GM13977 (cell line): ENCODE measurements at regions of chr6 and their contacts with region 1.

Region 1: DNA sequence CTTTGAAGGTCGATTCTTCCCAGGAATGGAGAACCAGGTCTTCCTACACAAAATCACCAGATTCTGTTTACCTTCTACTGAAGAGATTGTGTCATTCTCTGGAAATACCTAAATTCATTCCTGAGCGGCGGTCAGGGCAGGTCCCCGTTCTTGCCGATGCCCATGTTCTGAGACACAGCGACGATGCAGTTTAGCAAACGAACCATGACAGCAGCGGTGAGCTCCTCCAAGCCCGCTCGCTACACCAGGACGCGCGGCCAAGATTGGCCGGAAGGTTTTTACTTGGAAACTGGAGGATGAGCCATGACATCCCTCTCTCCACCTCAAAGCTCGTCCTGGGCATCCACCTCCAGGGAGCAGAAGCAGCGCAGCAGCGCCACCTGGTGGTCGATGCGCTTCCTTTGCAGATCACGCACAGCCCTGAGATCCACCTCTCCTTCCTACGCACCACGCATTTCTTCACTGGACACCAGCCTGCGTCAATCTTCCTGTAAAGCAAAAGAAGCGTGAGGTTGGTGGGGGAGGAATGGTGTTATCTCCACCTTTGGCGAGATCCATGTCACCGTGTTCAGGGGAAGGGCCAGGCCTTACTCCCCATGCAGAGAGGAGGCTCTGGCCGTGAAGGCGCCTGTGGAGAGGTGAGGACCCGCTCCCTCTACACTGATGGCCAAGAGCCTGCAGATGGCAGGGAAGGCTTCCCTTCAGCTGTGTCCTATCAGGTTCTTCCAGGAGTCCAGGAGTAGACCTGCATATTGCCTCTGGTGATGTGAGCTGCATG is 9.9 kb upstream of the HLA-B start:
- DNase-seq: peak; percentile 75
- CTCF ChIP-seq: peak; percentile 88

Region 2: GRCh38 chr6:30942338-30943060 is 424.4 kb before region 1 on chr6:
- in situ Hi-C with region 1: no loop called
- DNase-seq: no peak
- CTCF ChIP-seq: no peak

Region 3: DNA sequence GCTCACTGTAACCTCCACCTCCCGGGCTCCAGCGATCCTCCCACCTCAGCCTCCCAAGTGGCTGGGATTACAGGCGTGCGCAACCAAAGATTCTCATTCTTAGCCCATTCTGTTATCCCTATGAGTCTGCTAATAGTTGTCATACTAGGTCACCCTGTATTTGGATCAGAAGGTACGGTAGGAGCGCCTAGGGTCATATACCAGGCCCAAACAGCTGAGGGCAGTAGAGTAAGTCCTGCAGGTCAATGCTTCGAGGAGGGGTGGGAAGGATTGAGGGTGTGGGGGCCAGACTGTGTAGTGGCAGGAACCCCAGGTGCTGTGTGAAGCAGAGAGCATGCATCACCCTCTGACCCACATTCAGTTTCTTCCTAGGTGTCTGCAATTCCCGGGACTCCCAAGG is 173.7 kb before region 1 on chr6:
- in situ Hi-C with region 1: loop called (anchors 5 kb)
- DNase-seq: no peak
- CTCF ChIP-seq: no peak